WTC11 (cell line): ENCODE measurements at regions of chr9 and their contacts with region 1.

Region 1: DNA sequence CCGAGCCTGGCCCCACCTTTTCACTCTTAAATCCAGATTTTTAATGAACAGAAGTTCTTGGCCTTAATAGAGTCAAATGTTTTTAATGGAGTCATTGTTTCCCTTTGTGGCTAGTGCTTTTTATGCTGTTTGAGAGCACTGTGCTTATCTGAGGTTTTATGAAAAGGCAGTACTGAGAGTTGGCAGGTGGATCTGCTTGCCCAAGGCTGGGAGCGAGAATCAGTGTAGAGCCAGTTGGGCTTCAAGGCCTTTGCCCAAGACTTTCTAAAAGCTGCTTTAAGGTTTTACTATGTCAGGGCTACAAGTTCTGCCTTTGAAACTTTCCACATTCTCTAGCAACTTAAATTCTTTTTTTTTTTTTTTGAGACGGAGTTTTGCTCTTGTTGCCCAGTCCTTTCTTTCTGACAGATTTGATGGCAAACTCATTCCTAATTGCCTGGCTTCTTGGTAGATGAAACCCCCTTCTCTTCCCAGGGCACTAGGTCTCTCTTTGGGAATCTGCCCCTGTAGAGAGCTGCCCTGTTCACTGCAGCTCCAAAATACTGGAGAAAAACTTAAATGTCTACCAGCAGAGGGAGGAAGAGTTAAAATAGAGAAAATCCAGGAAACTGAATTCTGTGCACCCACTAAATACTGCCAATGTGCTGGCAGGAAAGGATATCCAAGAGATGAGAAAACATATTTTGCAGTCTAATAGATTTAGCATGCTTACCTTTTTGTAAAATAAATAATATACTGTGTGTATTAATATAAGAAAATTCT is 36.9 kb upstream of the CDK20 start:
- DNase-seq: no peak
- ATAC-seq: peak; percentile 48; the same call in 1 of the 2 replicates
- H3K4me3 Mint-ChIP-seq: no peak overlapping the region
- H3K27ac Mint-ChIP-seq: 0 out of 2 replicates have a peak overlapping the region, but pooled peaks have one; percentile 23
- H3K4me1 Mint-ChIP-seq: peaks cover 21% of the 10 kb centered on the region
- H3K27me3 Mint-ChIP-seq: peaks cover 5% of the 10 kb centered on the region; the same call in 1 of the 2 replicates
- CTCF ChIP-seq: no peak

Region 2: DNA sequence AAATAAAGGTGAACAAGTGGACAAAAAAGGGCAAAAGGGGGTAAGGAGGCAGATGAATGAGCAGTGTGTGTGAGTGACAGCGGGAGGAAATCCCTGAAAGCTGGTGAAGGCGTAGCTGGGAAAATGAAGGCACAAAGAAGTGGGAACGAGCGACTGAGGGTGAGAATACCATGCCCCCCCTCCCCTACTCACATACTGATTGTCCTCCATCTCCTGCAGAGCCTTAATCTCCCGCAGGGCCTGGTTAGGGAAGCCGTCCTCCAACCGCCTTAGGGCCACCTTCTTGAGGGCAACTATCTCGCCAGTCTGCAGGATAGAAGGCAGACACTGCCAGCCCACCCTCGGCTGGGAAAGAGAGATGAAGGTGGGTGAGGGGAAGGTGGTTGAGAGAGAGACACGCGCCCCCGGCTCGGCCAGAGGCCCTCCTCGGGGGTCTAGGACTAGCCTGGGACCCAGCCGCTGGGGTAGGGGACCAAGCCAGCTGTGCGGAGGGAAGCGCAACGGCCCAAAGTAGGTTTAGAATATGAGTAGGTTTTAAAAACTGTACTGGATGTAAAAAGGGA is 37.4 kb before region 1 on chr9:
- CTCF ChIA-PET with region 1: interaction called, 14 read pairs
- POLR2A ChIA-PET with region 1: no interaction called
- DNase-seq: no peak
- ATAC-seq: peak; percentile 7
- H3K4me3 Mint-ChIP-seq: peak overlapping the region; percentile 90
- H3K27ac Mint-ChIP-seq: no peak overlapping the region
- H3K4me1 Mint-ChIP-seq: peaks cover 5% of the 10 kb centered on the region
- H3K27me3 Mint-ChIP-seq: peaks cover 16% of the 10 kb centered on the region
- CTCF ChIP-seq: no peak

Region 3: GRCh38 chr9:88025399-88026117 is 14.4 kb after region 1 on chr9:
- CTCF ChIA-PET with region 1: interaction called, 21 read pairs
- POLR2A ChIA-PET with region 1: interaction called, 3 read pairs
- DNase-seq: peak; percentile 20
- ATAC-seq: peak; percentile 65
- H3K4me3 Mint-ChIP-seq: no peak overlapping the region; the same call in 1 of the 2 replicates
- H3K27ac Mint-ChIP-seq: peak overlapping the region; percentile 20
- H3K4me1 Mint-ChIP-seq: peaks cover 27% of the 10 kb centered on the region
- H3K27me3 Mint-ChIP-seq: peaks cover 5% of the 10 kb centered on the region; the same call in 1 of the 2 replicates
- CTCF ChIP-seq: no peak

Region 4: DNA sequence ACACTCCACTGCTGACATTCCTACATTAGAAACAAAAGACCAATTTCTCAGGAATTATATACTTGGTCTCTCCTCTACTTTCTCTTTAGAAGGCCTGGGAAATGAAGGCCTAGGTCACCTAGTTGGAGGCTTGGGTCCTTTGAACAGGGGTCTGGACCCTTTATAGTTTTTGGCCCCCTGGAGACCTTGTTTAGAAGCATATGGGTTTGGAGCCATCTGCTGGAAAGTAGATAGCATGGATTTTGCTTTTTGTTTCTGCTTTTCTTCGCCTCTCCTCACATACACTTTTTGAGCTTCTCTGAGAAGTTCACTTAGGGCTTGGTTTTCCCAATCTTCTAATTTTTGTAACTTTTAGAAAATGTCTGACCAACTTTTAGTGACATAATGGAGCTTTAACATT is 30.3 kb after region 1 on chr9:
- CTCF ChIA-PET with region 1: interaction called, 15 read pairs
- POLR2A ChIA-PET with region 1: interaction called, 3 read pairs
- DNase-seq: no peak
- ATAC-seq: peak; percentile 56
- H3K4me3 Mint-ChIP-seq: no peak overlapping the region
- H3K27ac Mint-ChIP-seq: no peak overlapping the region
- H3K4me1 Mint-ChIP-seq: peaks cover 23% of the 10 kb centered on the region
- H3K27me3 Mint-ChIP-seq: peaks cover 8% of the 10 kb centered on the region
- CTCF ChIP-seq: peak; percentile 29; the same call in 1 of the 2 replicates

Region 5: GRCh38 chr9:88076286-88077090 is 65.3 kb after region 1 on chr9:
- CTCF ChIA-PET with region 1: interaction called, 12 read pairs
- POLR2A ChIA-PET with region 1: no interaction called
- DNase-seq: peak; percentile 71
- ATAC-seq: peak; percentile 86
- H3K4me3 Mint-ChIP-seq: peak overlapping the region; percentile 75
- H3K27ac Mint-ChIP-seq: no peak overlapping the region
- H3K4me1 Mint-ChIP-seq: peaks cover 32% of the 10 kb centered on the region
- H3K27me3 Mint-ChIP-seq: peaks cover 61% of the 10 kb centered on the region
- CTCF ChIP-seq: no peak

Region 6: GRCh38 chr9:88236531-88237478 is 225.6 kb after region 1 on chr9:
- CTCF ChIA-PET with region 1: no interaction called
- POLR2A ChIA-PET with region 1: no interaction called
- DNase-seq: no peak
- ATAC-seq: no peak
- H3K4me3 Mint-ChIP-seq: no peak overlapping the region
- H3K27ac Mint-ChIP-seq: no peak overlapping the region
- H3K4me1 Mint-ChIP-seq: 0 out of 2 replicates have a peak, but pooled peaks cover 11% of the 10 kb centered on the region
- H3K27me3 Mint-ChIP-seq: no peaks in the 10 kb centered on the region
- CTCF ChIP-seq: no peak